GM12878 (cell line): ENCODE measurements at regions of chr12 and their contacts with region 1.

Region 1: GRCh38 chr12:55926738-55927587 is 731 bp downstream of the PYM1 start:
- DNase-seq: peak; percentile 81
- ATAC-seq: peak; percentile 65
- H3K4me3 ChIP-seq: peak overlapping the region; percentile 93
- H3K27ac ChIP-seq: peak overlapping the region; percentile 96
- H3K4me1 ChIP-seq: peaks cover 3% of the 10 kb centered on the region; the same call in 1 of the 2 replicates
- H3K27me3 ChIP-seq: no peaks in the 10 kb centered on the region
- CTCF ChIP-seq: peak; percentile 73 to 79 (median 73)
- EP300 ChIP-seq: peak; percentile 25 to 45; a peak in 1 of 4 replicates
- POLR2A ChIP-seq: peak; percentile 80
- RAD21 ChIP-seq: peak; percentile 38

Region 2: GRCh38 chr12:55336002-55336401 is 591.0 kb before region 1 on chr12:
- CTCF ChIA-PET with region 1: no interaction called
- POLR2A ChIA-PET with region 1: no interaction called
- RAD21 ChIA-PET with region 1: no interaction called
- SMC1A ChIA-PET with region 1: no interaction called
- in situ Hi-C with region 1: no loop called
- intact Hi-C with region 1: no loop called
- DNase-seq: no peak
- ATAC-seq: no peak
- H3K4me3 ChIP-seq: no peak overlapping the region
- H3K27ac ChIP-seq: no peak overlapping the region
- H3K4me1 ChIP-seq: no peaks in the 10 kb centered on the region
- H3K27me3 ChIP-seq: no peaks in the 10 kb centered on the region
- CTCF ChIP-seq: no peak
- EP300 ChIP-seq: no peak
- POLR2A ChIP-seq: no peak
- RAD21 ChIP-seq: no peak

Region 3: DNA sequence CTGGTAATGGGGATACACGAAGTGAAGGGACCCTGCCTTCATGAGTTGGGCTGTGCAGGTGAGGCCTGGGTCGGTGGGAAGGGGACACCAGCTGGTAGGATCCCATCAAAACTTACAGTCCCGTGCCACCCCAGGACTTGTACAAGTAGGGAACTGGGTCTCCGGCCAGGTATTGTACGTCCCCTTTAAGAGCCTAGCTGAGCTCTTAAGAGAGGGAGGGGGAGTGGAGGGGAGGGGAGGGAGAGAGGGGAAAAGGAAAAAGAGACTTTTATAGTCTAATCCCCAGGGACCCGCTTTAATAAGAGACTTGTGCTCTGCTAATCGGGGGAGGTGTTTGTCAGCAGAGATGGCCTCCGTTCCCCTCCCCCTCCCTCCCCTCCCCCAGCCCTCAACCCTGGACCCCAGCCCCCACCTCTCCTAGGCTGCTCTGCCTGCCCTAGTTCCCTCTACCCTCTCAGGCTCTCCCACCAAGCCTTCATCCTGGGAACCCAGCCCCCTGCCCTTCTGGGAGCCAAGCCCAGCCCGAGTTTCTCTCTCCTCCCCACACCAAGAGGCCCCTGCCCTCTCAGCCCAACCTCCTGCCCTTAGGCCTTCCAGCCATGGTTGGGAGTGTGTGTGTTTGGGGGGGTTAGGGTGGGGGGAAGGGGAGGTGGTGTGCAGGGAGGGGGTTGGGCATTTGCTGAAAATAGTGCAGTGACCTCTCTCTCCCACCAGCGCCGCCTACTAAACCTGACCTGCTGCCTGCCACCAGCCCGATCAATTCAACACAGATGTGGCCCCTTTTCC is 181.4 kb before region 1 on chr12:
- CTCF ChIA-PET with region 1: interaction called, 24 read pairs
- POLR2A ChIA-PET with region 1: interaction called, 24 read pairs
- RAD21 ChIA-PET with region 1: interaction called, 30 read pairs
- SMC1A ChIA-PET with region 1: interaction called, 4 read pairs
- in situ Hi-C with region 1: no loop called
- intact Hi-C with region 1: no loop called
- DNase-seq: no peak
- ATAC-seq: peak; percentile 11
- H3K4me3 ChIP-seq: peak overlapping the region; percentile 79
- H3K27ac ChIP-seq: no peak overlapping the region
- H3K4me1 ChIP-seq: peaks cover 5% of the 10 kb centered on the region
- H3K27me3 ChIP-seq: no peaks in the 10 kb centered on the region
- CTCF ChIP-seq: no peak
- EP300 ChIP-seq: no peak
- POLR2A ChIP-seq: no peak
- RAD21 ChIP-seq: no peak

Region 4: DNA sequence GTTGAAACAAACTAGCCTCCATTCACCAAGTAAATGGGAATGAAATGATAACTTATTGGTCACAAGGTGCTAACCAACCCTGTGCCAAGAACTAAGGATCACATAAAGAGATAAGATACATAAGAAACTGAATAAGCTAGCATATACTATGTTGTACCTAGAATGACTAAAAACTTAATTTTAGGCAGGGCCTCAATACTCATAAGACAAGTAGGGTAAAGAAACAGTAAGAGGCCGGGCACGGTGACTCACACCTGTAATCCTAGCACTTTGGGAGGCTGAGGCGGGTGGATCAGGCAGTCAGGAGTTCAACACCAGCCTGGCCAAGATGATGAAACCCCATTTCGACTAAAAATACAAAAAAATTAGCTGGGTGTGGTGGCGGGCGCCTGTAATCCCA is 166.3 kb before region 1 on chr12:
- CTCF ChIA-PET with region 1: no interaction called
- POLR2A ChIA-PET with region 1: no interaction called
- RAD21 ChIA-PET with region 1: no interaction called
- SMC1A ChIA-PET with region 1: no interaction called
- in situ Hi-C with region 1: no loop called
- intact Hi-C with region 1: no loop called
- DNase-seq: no peak
- ATAC-seq: no peak
- H3K4me3 ChIP-seq: no peak overlapping the region
- H3K27ac ChIP-seq: no peak overlapping the region
- H3K4me1 ChIP-seq: no peaks in the 10 kb centered on the region
- H3K27me3 ChIP-seq: no peaks in the 10 kb centered on the region
- CTCF ChIP-seq: no peak
- EP300 ChIP-seq: no peak
- POLR2A ChIP-seq: no peak
- RAD21 ChIP-seq: no peak

Region 5: DNA sequence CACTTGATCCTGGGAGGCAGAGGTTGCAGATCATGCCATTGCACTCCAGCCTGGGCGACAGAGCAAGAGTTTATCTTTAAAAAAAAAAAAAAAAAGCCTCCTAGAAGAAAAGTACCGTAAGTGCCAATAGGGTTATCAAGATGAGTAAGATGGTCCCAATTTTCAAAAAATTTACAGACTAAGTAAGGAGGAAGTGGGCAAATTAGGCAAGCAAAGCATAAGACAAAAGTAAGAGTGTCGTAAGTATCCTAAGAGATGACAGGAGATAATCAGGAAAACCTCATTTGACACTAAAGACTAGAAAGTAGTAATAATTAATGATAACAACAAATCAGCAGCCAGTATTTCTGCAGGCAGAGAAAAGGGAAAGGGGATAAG is 11.5 kb before region 1 on chr12:
- CTCF ChIA-PET with region 1: interaction called, 25 read pairs
- POLR2A ChIA-PET with region 1: interaction called, 7 read pairs
- RAD21 ChIA-PET with region 1: no interaction called
- SMC1A ChIA-PET with region 1: interaction called, 5 read pairs
- in situ Hi-C with region 1: no loop called
- intact Hi-C with region 1: no loop called
- DNase-seq: no peak
- ATAC-seq: peak; percentile 78
- H3K4me3 ChIP-seq: no peak overlapping the region
- H3K27ac ChIP-seq: no peak overlapping the region
- H3K4me1 ChIP-seq: peaks cover 7% of the 10 kb centered on the region; the same call in 1 of the 2 replicates
- H3K27me3 ChIP-seq: no peaks in the 10 kb centered on the region
- CTCF ChIP-seq: no peak
- EP300 ChIP-seq: no peak
- POLR2A ChIP-seq: no peak
- RAD21 ChIP-seq: no peak

Region 6: DNA sequence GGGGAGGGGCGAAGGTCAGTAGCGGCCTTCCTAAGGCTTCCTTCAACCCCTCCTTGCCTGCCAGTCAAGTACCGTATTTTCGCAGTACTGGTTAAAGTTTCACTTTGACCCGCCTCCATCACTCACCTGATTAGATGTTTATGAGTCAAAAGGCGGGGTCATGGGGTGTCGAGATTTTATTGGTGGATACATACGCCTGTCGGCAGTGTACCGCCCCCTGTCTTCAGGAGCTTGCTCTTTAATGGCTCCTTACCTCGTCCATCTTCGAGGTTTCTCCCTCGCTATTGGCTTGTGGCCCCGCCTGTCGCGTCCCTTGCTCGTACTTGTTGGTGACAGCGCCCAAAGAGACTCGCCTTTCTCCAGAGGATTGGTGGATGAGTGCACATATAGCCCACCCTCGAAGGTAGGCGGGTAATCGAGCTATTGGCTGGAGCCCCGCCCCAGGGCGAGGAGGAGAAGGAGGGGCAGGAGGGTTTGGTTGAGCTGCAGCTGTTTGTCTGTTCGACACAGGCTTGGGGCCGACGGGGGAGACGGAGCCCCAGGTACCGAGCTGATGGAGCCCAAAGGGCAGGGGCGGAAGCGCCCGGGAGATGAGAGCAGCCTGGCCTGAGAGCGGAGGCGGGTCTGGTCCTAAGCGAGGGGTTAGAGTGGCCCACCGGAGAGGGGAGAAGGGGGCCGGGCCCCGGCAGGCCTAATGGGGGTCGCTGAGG is 46.8 kb after region 1 on chr12 and contains the start of gene RAB5B:
- CTCF ChIA-PET with region 1: interaction called, 16 read pairs
- POLR2A ChIA-PET with region 1: interaction called, 66 read pairs
- RAD21 ChIA-PET with region 1: interaction called, 25 read pairs
- SMC1A ChIA-PET with region 1: interaction called, 6 read pairs
- in situ Hi-C with region 1: no loop called
- intact Hi-C with region 1: loop called (anchors 1 kb)
- DNase-seq: peak; percentile 100
- ATAC-seq: peak; percentile 91
- H3K4me3 ChIP-seq: peak within 1 kb of the TSS; percentile 88
- H3K27ac ChIP-seq: peak within 1 kb of the TSS; percentile 85
- H3K4me1 ChIP-seq: peaks cover 2% of the 10 kb centered on the region; the same call in 1 of the 2 replicates
- H3K27me3 ChIP-seq: no peaks in the 10 kb centered on the region
- CTCF ChIP-seq: no peak
- EP300 ChIP-seq: no peak
- POLR2A ChIP-seq: peak; percentile 97
- RAD21 ChIP-seq: no peak
- polyA plus RNA-seq, gene RAB5B: 7.5 to 11.3 TPM

Region 7: DNA sequence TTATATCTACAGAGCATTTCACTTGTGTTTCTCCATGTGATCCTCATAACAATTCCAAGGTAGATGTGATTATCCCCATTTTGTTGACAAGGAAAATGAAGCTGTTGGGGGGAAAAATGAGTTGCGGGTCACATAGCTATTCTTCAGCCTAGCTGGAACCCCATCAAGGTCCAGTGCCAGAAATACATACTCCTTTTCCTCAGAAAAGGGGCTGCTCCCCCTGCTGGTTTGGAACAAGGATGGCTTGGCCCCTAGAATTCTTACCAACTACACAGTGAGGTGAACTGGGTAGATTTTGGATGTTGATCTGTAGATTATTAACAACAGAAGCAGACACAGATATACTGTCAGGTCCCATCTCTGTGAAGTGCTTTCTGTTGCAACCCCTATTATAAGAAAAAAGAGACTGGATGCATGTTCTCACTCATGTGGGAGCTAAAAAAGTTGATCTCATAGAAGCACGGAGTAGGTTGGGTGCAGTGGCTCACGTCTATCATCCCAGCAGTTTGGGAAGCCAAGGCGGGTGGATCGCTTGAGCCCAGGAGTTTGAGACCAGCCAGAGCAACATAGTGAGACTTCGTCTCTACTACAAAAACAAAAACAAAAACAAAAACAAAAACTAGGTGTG is 102.8 kb after region 1 on chr12:
- CTCF ChIA-PET with region 1: interaction called, 10 read pairs
- POLR2A ChIA-PET with region 1: no interaction called
- RAD21 ChIA-PET with region 1: interaction called, 3 read pairs
- SMC1A ChIA-PET with region 1: interaction called, 5 read pairs
- in situ Hi-C with region 1: no loop called
- intact Hi-C with region 1: no loop called
- DNase-seq: no peak
- ATAC-seq: peak; percentile 94
- H3K4me3 ChIP-seq: no peak overlapping the region
- H3K27ac ChIP-seq: no peak overlapping the region
- H3K4me1 ChIP-seq: no peaks in the 10 kb centered on the region
- H3K27me3 ChIP-seq: no peaks in the 10 kb centered on the region
- CTCF ChIP-seq: peak; percentile 69 to 72 (median 71)
- EP300 ChIP-seq: no peak
- POLR2A ChIP-seq: no peak
- RAD21 ChIP-seq: peak; percentile 64

Region 8: DNA sequence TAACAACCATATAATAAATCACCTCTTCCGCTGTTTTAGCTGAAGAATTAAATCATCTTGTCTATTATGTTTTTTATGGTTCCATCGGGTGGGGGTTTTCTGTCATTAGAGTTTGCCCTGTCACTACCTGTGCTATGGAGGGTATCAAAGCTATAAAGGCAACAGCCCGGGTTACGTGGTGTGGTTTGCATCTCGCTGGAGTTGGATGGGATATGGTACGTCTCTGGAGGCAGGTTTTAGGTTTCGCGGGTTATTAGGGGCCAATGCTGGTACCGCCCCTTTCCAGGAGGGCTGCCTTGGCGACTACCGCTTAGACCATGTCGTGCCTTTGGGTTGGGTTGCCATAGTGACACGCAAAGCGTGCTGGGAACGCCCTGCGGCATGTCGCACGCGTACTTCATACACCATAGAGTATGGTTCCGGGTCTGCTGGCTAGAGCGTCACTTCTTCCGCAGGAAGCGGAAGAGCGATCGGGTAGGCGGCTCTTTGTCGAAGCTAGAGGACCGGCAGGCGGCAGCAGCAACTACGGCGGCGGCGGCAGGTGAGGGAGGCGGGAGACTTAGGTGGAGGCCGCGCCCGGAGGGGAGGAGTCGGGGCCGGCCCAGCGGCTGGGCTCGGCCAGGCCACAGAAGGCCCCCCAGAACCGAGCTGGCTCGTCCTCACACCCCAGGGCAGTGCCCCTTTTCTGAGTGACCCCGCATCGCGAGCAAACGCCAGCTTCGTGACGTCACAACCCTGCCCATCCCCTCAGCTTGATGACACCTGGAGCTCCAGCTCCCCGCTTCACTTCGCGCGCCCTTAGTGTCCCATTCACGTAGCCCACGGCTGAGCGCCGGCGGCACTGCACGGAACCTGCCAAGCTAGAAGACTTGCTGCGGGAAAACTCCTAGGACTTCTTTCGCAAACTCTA is 191.1 kb after region 1 on chr12 and contains the start of gene ZC3H10:
- CTCF ChIA-PET with region 1: interaction called, 3 read pairs
- POLR2A ChIA-PET with region 1: interaction called, 8 read pairs
- RAD21 ChIA-PET with region 1: no interaction called
- SMC1A ChIA-PET with region 1: no interaction called
- in situ Hi-C with region 1: no loop called
- intact Hi-C with region 1: loop called (anchors 5 kb)
- DNase-seq: peak; percentile 99
- ATAC-seq: peak; percentile 86
- H3K4me3 ChIP-seq: peak within 1 kb of the TSS; percentile 90
- H3K27ac ChIP-seq: peak within 1 kb of the TSS; percentile 79
- H3K4me1 ChIP-seq: peaks cover 15% of the 10 kb centered on the region
- H3K27me3 ChIP-seq: no peaks in the 10 kb centered on the region
- CTCF ChIP-seq: peak; percentile 40 to 69 (median 48)
- EP300 ChIP-seq: no peak
- POLR2A ChIP-seq: peak; percentile 99
- RAD21 ChIP-seq: no peak
- polyA plus RNA-seq, gene ZC3H10: 0.56 to 0.75 TPM